Head of caudate nucleus (tissue), 42 donors: ENCODE measurements at regions of chr17 and their contacts with region 1.

Region 1: DNA sequence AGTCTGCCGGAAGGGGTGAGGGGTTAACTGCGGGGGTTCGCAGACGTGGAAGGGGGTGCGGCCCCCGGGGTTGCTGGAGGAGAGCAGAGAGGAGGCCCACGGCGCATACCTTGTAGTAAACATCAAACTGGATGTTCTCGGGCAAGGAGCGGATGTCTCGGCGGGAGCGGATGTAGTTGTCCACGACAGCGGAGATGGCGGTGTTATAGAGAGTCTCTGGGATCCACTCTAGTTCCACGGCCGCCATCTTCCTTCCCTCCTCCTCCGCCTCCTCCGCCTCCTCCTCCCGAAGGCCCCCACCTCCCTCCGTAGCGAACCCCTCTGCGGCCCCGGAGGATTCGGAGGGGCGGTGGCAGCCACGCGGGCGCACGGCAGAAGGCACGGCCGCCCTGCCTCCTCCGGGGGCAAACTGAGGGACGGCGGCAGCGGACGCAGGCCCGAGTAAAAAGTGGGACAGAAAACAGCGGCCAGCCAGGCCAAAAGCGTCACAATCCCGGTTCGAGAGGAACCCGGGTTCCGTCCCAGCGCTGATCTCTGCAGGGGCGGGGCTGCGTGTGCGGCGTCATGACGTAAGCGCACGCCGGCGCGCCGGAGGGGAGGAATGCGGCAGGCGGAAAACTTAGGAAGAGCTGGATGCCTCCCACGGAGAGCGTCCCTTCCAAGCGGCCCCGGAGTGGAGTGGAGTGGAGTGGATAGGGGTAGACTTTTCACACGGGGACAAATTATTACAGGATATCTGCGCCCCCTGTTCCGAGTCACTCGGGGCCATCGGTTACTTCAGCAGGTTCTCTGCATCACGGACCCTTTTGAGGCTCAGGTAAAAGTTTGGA is at the start of gene APPBP2:
- DNase-seq: peak; percentile 77 to 96 (median 91)

Region 2: DNA sequence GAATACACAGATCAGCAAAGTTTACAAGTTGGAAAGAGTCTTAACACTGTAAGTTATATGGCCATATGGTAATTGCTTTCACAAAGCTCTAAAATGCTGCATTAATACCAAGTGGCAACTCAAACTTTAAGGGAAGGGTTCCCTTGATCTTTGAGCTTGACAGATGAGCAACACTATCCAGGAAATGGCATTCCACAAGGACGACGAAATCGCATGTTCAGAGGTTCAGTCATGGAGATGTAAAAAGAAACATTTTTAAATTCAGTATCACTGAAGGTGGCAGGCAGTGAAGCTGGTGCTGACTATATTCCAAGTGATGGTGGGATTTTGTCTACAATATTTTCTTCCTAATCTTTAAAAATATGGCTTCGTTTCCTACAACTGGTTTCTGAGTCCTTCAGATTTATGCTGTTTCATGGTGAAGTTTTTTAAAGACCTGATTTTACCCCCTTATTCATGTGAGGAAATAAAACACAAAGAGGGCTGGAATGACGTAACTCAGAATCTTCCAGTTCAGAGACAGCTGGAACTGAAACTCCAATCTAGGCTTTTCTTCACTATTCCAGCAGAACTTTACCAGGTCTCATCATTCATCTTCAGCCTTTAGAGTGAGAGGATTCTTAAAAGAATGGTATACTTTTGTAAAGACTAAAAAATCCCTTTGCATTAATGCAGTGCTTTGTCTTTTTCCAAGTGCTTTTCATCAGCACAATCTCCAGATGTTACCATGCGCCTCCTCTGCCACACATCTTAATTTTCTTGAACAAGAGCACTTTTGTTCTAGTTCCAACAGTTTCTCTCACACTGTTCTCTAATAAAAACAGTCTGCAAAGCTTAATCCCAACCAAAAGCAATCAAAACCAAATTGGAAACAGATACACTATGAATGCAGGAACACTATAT is 83.4 kb before region 1 on chr17:
- intact Hi-C with region 1: loop called (anchors 10 kb)
- DNase-seq: peak in 4 of 42 donors; percentile 23 to 56 (median 39)

Region 3: GRCh38 chr17:60599620-60600489 is 74.0 kb after region 1 on chr17 and contains the start of gene PPM1D:
- intact Hi-C with region 1: loop called (anchors 10 kb)
- DNase-seq: peak; percentile 97 to 100 (median 99)